B cell (primary cell): ENCODE measurements at regions of chr14 and their contacts with region 1.

Region 1: DNA sequence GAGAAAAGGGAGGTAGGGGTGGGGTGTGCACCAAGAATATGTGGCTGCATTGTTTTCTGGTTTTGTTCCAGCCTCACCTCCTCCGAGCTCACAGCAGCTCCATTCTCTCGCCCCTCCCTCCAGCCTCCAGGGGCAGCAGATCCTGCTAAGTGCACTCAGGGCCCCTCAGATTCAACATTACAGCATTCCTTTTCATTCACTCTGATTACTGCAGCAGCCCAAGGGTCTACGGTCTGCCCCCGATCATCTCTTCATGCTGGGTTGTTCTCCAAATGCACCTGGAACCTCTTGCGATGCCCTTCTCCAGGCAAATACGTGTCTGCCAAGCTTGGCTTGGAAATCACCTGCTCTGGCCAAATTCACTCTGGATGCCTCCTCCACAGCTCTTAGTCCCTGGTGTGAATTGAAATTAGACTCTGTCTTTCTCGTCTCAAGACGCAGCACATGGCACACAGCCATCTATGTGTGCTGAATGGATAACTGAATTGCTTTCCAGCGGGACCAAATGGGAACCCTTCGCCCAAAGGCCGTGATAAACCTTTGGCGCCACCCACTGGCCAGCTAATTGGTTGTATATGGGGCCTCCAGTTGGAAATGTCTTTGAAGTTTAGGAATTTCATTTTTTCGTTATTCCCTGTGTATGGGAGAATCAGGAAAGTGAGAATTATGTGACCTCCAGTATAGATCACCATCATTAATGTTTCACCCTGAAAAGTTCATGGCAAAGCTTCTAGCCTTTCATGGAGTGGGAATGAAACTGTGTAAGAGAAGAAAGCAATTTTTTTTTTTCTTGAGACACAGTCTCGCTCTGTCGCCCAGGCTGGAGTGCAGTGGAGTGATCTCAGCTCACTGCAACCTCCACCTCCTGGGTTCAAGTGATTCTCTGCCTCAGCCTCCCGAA is 9.6 kb upstream of the HSP90AA1 start:
- DNase-seq: peak; percentile 69
- ATAC-seq: peak; percentile 73
- H3K4me3 ChIP-seq: no peak overlapping the region
- H3K4me3 Mint-ChIP-seq: no peak overlapping the region
- H3K27ac ChIP-seq: no peak overlapping the region
- H3K27ac Mint-ChIP-seq: no peak overlapping the region
- H3K4me1 ChIP-seq: peaks cover 0 to 3% of the 10 kb centered on the region in 2 donors
- H3K4me1 Mint-ChIP-seq: peaks cover 4% of the 10 kb centered on the region
- H3K27me3 ChIP-seq: no peaks in the 10 kb centered on the region
- H3K27me3 Mint-ChIP-seq: no peaks in the 10 kb centered on the region
- CTCF ChIP-seq: peak; percentile 78

Region 2: GRCh38 chr14:102046343-102047278 is 49.9 kb before region 1 on chr14:
- CTCF ChIA-PET with region 1: interaction called, 6 read pairs
- POLR2A ChIA-PET with region 1: no interaction called
- intact Hi-C with region 1: loop called (anchors 5 kb)
- DNase-seq: peak; percentile 41
- ATAC-seq: peak; percentile 61
- H3K4me3 ChIP-seq: no peak overlapping the region
- H3K4me3 Mint-ChIP-seq: no peak overlapping the region
- H3K27ac ChIP-seq: no peak overlapping the region
- H3K27ac Mint-ChIP-seq: no peak overlapping the region
- H3K4me1 ChIP-seq: no peaks in the 10 kb centered on the region
- H3K4me1 Mint-ChIP-seq: no peaks in the 10 kb centered on the region
- H3K27me3 ChIP-seq: no peaks in the 10 kb centered on the region
- H3K27me3 Mint-ChIP-seq: no peaks in the 10 kb centered on the region
- CTCF ChIP-seq: peak; percentile 22

Region 3: GRCh38 chr14:102063091-102063802 is 33.2 kb before region 1 on chr14:
- CTCF ChIA-PET with region 1: interaction called, 37 read pairs
- POLR2A ChIA-PET with region 1: no interaction called
- intact Hi-C with region 1: loop called (anchors 1 kb)
- DNase-seq: peak; percentile 76
- ATAC-seq: peak; percentile 98
- H3K4me3 ChIP-seq: no peak overlapping the region
- H3K4me3 Mint-ChIP-seq: no peak overlapping the region
- H3K27ac ChIP-seq: no peak overlapping the region
- H3K27ac Mint-ChIP-seq: no peak overlapping the region
- H3K4me1 ChIP-seq: peaks cover 0 to 3% of the 10 kb centered on the region in 2 donors
- H3K4me1 Mint-ChIP-seq: peaks cover 4% of the 10 kb centered on the region
- H3K27me3 ChIP-seq: peaks cover 0 to 2% (median 0%) of the 10 kb centered on the region in 4 experiments
- H3K27me3 Mint-ChIP-seq: no peaks in the 10 kb centered on the region
- CTCF ChIP-seq: peak; percentile 49